Right ventricle myocardium inferior (tissue), 1 donor: ENCODE measurements at regions of chr2 and their contacts with region 1.

Region 1: DNA sequence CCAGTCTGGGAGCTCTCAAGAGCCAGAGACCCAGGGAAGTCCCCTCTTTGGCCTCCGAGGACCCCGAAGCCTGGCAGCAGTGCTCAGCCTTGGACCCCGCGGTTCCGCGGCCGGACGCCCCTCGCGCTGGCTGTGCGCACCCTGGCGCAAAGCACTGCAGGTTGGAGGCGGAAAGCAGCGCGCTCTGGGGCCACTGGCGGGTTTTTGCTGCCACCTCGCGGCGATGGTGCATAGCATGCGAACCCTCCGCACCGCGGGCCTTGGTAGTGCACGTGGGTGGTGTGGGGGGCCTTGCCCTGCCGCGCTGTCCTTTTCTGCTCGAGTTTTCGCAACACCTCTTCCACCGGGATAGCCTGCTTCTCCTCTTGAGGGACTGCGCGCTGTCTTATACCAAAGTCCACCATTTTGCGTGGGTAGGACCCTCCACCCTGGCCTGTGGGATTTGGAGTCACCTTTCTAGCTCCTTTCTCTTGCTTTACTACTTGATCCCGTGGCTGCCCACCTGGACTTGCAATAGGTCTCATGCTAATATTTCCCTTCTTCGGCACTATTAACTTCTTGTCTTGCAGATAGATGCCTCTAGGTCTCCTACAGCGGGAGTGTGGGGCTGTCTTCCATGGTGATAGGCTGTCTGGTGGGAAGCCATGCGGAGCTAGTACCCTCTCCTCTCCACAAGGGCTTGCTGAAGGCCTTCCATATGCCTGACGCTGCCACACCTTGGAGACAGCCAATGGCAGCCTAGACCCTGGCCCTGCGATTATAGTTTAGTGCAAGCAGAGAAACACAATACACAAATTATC is 14.3 kb downstream of the SIX3 start:
- DNase-seq: peak; percentile 82
- ATAC-seq: peak; percentile 84

Region 2: DNA sequence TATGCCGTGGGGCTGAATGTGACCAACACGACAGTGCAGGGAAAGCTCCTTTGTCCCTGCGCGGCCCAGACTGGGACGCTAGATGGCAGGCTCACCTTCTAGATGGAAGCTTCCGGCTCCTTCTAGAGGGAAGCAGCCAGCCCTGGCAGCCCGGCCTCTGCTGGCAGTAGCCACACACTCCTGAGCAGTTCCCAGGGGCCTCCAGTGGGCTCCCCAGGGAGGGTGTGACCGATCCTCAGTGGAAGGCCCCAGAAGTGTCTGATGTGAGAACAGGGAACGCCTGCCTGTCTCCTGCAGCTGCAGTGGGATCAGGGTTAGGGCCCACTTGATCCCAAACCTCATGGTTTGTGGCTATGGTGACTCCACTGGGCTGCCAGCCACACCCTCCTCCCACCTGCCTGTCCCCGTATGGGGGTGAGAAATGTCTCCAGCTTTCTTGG is 911.5 kb before region 1 on chr2:
- intact Hi-C with region 1: loop called (anchors 10 kb)
- DNase-seq: peak; percentile 84
- ATAC-seq: peak; percentile 77

Region 3: GRCh38 chr2:44244129-44244871 is 711.5 kb before region 1 on chr2:
- intact Hi-C with region 1: loop called (anchors 10 kb)
- DNase-seq: no peak
- ATAC-seq: peak; percentile 63

Region 4: GRCh38 chr2:44392338-44392943 is 563.4 kb before region 1 on chr2:
- intact Hi-C with region 1: loop called (anchors 2 kb)
- DNase-seq: no peak
- ATAC-seq: no peak

Region 5: DNA sequence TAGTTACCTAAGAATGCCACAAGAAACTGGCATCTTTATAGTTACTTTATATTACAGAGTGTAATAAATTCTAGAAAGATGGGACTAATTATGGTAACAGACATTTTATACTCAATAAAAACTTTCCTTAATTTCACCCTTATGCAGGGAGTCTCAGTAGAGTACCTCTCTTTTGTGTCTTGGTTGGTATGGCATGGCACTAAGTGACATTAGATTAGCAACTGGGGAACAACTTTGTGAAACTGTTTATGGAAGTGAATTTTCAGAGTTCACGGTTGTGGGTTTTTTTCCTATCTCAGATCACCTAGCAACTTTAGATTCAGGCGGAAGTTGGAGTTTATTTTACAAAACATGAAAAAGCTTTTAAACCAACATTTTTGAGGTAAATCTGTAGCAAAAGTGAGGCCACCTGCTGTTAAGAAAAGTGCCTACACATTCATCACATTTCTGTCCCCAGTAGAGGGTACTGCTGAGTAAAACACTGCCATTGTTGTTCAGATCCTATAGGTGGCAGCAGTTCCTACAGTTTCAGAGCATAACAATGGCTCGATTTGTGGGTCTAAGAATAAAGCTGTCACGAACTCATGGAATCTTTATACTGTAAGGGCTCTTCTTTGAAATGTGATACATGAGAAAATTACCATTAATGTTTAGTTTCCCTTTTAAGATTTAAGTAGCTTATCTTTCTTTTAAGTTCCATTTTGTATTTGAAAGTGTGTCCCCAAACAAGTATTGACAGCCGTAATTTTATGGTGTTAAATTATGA is 476.5 kb before region 1 on chr2:
- intact Hi-C with region 1: loop called (anchors 2 kb)
- DNase-seq: no peak
- ATAC-seq: peak; percentile 91

Region 6: GRCh38 chr2:44560352-44560751 is 395.4 kb before region 1 on chr2:
- intact Hi-C with region 1: loop called (anchors 10 kb)
- DNase-seq: no peak
- ATAC-seq: no peak